CD4-positive, alpha-beta T cell (primary cell): ENCODE measurements at regions of chr1 and their contacts with region 1.

Region 1: GRCh38 chr1:223142795-223143536 is at the start of gene TLR5:
- DNase-seq: peak; percentile 81 to 97 (median 90)
- ATAC-seq: peak; percentile 87
- H3K4me3 ChIP-seq: peak within 1 kb of the TSS; percentile 64
- H3K4me3 Mint-ChIP-seq: peak within 1 kb of the TSS; percentile 66
- H3K27ac ChIP-seq: peak within 1 kb of the TSS; percentile 14 to 31
- H3K27ac Mint-ChIP-seq: peak within 1 kb of the TSS; percentile 83
- H3K4me1 ChIP-seq: peaks cover 30% of the 10 kb centered on the region
- H3K4me1 Mint-ChIP-seq: peaks cover 27% of the 10 kb centered on the region
- H3K27me3 ChIP-seq: no peaks in the 10 kb centered on the region
- H3K27me3 Mint-ChIP-seq: no peaks in the 10 kb centered on the region
- CTCF ChIP-seq: peak; percentile 69
- total RNA-seq, gene TLR5: 2.1 to 2.5 TPM

Region 2: GRCh38 chr1:222627232-222627631 is 515.7 kb before region 1 on chr1:
- CTCF ChIA-PET with region 1: no interaction called
- POLR2A ChIA-PET with region 1: no interaction called
- intact Hi-C with region 1: loop called in 1 of 2 experiments (anchors 10 kb)
- DNase-seq: no peak
- ATAC-seq: no peak
- H3K4me3 ChIP-seq: no peak overlapping the region
- H3K4me3 Mint-ChIP-seq: no peak overlapping the region
- H3K27ac ChIP-seq: no peak overlapping the region
- H3K27ac Mint-ChIP-seq: no peak overlapping the region
- H3K4me1 ChIP-seq: no peaks in the 10 kb centered on the region
- H3K4me1 Mint-ChIP-seq: peaks cover 8% of the 10 kb centered on the region
- H3K27me3 ChIP-seq: no peaks in the 10 kb centered on the region
- H3K27me3 Mint-ChIP-seq: no peaks in the 10 kb centered on the region
- CTCF ChIP-seq: no peak

Region 3: GRCh38 chr1:223123011-223123610 is 19.9 kb before region 1 on chr1:
- CTCF ChIA-PET with region 1: interaction called, 60 read pairs
- POLR2A ChIA-PET with region 1: no interaction called
- intact Hi-C with region 1: no loop called
- DNase-seq: no peak
- ATAC-seq: no peak
- H3K4me3 ChIP-seq: peak overlapping the region; percentile 23
- H3K4me3 Mint-ChIP-seq: peak overlapping the region; percentile 20
- H3K27ac ChIP-seq: no peak overlapping the region
- H3K27ac Mint-ChIP-seq: no peak overlapping the region
- H3K4me1 ChIP-seq: peaks cover 6% of the 10 kb centered on the region
- H3K4me1 Mint-ChIP-seq: peaks cover 8% of the 10 kb centered on the region
- H3K27me3 ChIP-seq: no peaks in the 10 kb centered on the region
- H3K27me3 Mint-ChIP-seq: no peaks in the 10 kb centered on the region
- CTCF ChIP-seq: no peak

Region 4: DNA sequence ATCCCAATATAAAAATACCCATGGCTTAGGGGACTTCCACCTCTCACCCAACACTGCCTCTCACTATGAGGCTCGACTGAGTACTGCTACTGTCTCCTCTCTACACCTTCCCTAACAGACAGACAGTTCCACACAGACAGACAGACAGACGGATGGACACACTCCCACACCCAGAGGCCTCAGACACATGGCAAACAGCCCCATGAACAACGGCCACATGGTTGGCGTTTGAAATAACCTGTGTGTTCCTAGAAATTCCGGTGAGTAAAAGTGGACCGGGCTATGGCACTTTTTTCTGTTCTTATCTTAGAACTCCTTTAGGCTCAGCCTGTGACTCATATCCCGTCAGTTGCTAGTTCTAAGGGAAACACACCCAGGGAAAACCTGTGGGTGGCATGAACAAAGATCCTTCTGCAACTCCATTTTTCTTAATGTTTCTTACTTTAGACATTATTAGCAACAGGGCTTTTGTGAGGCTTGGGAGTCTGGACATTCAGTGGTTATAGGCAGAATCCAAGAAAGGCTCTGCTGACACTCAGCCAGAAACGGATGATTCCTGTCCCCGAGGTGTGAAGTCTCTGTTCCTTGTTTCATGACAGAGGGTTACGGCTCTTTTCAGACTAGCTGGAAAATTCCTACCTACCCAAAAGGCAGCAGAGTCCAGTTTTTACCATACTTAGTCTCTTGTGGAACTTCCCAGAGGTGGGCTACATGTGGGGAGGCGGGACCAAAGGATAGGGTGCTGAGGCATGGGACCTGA is 90.6 kb after region 1 on chr1:
- CTCF ChIA-PET with region 1: no interaction called
- POLR2A ChIA-PET with region 1: interaction called, 6 read pairs
- intact Hi-C with region 1: loop called in 1 of 2 experiments (anchors 5 kb)
- DNase-seq: peak in 2 of 14 experiments; percentile 47 to 48
- ATAC-seq: peak; percentile 41
- H3K4me3 ChIP-seq: no peak overlapping the region
- H3K4me3 Mint-ChIP-seq: peak overlapping the region; percentile 1
- H3K27ac ChIP-seq: peak overlapping the region in 1 of 2 donors; percentile 86
- H3K27ac Mint-ChIP-seq: peak overlapping the region; percentile 95
- H3K4me1 ChIP-seq: peaks cover 62% of the 10 kb centered on the region
- H3K4me1 Mint-ChIP-seq: peaks cover 74% of the 10 kb centered on the region
- H3K27me3 ChIP-seq: no peaks in the 10 kb centered on the region
- H3K27me3 Mint-ChIP-seq: no peaks in the 10 kb centered on the region
- CTCF ChIP-seq: no peak

Region 5: GRCh38 chr1:223363856-223364684 is 221.1 kb after region 1 on chr1 and contains the start of gene SUSD4:
- CTCF ChIA-PET with region 1: no interaction called
- POLR2A ChIA-PET with region 1: interaction called, 18 read pairs
- intact Hi-C with region 1: no loop called
- DNase-seq: peak; percentile 55 to 91 (median 76)
- ATAC-seq: peak; percentile 89
- H3K4me3 ChIP-seq: peak within 1 kb of the TSS; percentile 66
- H3K4me3 Mint-ChIP-seq: peak within 1 kb of the TSS; percentile 98
- H3K27ac ChIP-seq: no peak within 1 kb of the TSS
- H3K27ac Mint-ChIP-seq: peak within 1 kb of the TSS; percentile 82
- H3K4me1 ChIP-seq: peaks cover 22% of the 10 kb centered on the region
- H3K4me1 Mint-ChIP-seq: peaks cover 39% of the 10 kb centered on the region
- H3K27me3 ChIP-seq: peaks cover 0 to 4% of the 10 kb centered on the region in 2 experiments
- H3K27me3 Mint-ChIP-seq: no peaks in the 10 kb centered on the region
- CTCF ChIP-seq: no peak
- total RNA-seq, gene SUSD4: 13.0 to 13.8 TPM